ENCODE measurements at regions of chr2 and their contacts with region 1.

Region 1: DNA sequence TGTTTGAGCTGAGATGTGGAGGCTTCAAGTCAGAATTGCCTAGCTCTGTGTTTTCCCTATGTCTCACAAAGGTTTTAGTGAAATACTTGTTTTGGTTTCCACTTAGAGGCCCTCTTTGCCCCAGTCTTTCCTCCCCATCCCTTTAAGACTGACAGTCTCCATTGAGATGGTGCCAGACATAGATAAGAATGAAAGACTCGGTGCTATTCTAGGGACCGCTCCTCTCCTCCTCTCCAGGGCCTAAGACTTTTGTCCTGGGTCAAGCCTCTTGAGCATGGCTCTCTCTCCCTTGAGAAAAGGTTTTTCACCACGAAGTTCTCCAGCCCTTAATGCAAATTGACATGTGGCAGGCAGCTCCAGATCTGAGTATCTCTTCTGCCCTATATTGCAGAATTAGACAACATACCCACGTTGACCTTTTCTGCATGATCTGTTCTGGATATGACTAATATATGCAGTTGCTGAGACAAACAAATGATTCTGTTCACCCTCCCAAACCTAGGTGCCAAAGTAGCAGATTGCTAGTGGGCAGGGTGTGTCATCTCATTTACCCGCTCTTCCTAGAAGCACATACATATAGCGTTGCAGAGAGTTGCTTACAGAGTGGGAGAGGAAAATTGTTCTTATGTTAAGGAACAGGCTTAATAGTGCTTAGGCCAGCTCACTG is 47.5 kb upstream of the ACSL3 start:
- DNase-seq: peak; percentile 63
- ATAC-seq: peak; percentile 91
- H3K4me3 Mint-ChIP-seq: no peak overlapping the region
- H3K27ac Mint-ChIP-seq: peak overlapping the region; percentile 90
- H3K4me1 Mint-ChIP-seq: peaks cover 27% of the 10 kb centered on the region
- H3K27me3 Mint-ChIP-seq: no peaks in the 10 kb centered on the region

Region 2: DNA sequence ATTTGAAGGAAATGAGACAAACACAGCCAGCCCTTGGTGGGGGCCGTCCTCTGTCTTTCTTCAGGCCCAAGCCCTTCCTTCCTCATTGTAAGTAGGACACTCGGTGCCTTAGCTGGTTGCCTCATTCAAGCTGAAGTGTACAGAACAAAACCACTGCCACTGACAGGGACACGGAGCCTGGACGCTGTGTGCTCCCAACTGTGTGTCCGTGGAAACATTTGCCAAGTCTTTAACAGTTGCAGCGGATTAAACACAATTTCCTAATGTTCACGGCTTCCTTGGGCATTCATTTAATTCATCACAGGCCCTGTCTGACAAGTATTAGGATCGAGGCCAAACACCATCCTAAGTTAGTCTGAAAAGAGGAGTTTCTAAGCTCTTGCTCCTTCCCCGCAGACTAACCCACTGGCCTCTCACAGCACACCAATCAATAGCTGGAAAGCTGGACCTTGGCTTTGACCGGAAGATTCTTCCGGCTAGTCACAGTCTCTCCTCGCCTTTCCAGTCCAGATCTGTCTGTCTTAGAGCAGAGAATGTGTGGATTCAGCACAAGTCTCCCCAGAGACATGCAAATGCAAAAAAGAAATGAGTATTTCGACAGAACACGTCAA is 21.2 kb before region 1 on chr2:
- CTCF ChIA-PET with region 1: interaction called, 11 read pairs
- POLR2A ChIA-PET with region 1: interaction called, 5 read pairs
- intact Hi-C with region 1: loop called (anchors 2 kb)
- DNase-seq: no peak
- ATAC-seq: no peak
- H3K4me3 Mint-ChIP-seq: no peak overlapping the region
- H3K27ac Mint-ChIP-seq: no peak overlapping the region
- H3K4me1 Mint-ChIP-seq: peaks cover 16% of the 10 kb centered on the region
- H3K27me3 Mint-ChIP-seq: no peaks in the 10 kb centered on the region

Region 3: DNA sequence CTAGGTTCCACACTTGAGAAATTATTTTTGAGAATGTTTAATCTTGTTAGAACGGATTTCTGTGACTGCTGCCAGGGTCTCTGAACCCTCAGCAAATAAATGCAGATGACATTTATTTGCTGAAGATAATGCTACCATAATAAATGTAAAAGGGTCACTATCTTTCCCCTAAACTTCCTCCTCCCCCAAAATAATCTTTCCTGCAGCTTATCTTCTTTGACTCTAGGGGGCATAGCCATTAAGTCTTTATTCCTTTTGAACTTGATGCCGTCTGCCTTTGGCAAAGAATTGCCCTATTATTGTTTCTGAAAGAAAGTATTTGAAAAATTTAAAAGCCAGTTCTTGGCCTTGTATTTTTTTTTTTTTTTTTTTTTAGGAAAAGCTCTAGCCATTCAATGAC is 16.0 kb before region 1 on chr2:
- CTCF ChIA-PET with region 1: interaction called, 11 read pairs
- POLR2A ChIA-PET with region 1: no interaction called
- intact Hi-C with region 1: no loop called
- DNase-seq: no peak
- ATAC-seq: peak; percentile 37
- H3K4me3 Mint-ChIP-seq: no peak overlapping the region
- H3K27ac Mint-ChIP-seq: no peak overlapping the region
- H3K4me1 Mint-ChIP-seq: no peaks in the 10 kb centered on the region
- H3K27me3 Mint-ChIP-seq: no peaks in the 10 kb centered on the region

Region 4: GRCh38 chr2:222860740-222861410 is 47.6 kb after region 1 on chr2 and contains the start of gene ACSL3:
- CTCF ChIA-PET with region 1: interaction called, 4 read pairs
- POLR2A ChIA-PET with region 1: interaction called, 4 read pairs
- intact Hi-C with region 1: loop called (anchors 2 kb)
- DNase-seq: peak; percentile 97
- ATAC-seq: peak; percentile 100
- H3K4me3 Mint-ChIP-seq: peak within 1 kb of the TSS; percentile 67
- H3K27ac Mint-ChIP-seq: peak within 1 kb of the TSS; percentile 91
- H3K4me1 Mint-ChIP-seq: peaks cover 9% of the 10 kb centered on the region
- H3K27me3 Mint-ChIP-seq: peaks cover 4% of the 10 kb centered on the region
- total RNA-seq, gene ACSL3: 46.2 to 48.8 TPM

Measured in activated CD4-positive, alpha-beta T cell treated with anti-CD3 and anti-CD28 coated beads for 36 hours (primary cell).